ENCODE measurements at regions of chr3 and their contacts with region 1.

Region 1: GRCh38 chr3:11379233-11379823 is 107.1 kb downstream of the ATG7 start:
- DNase-seq: no peak
- H3K4me3 Mint-ChIP-seq: no peak overlapping the region
- H3K27ac Mint-ChIP-seq: no peak overlapping the region
- H3K4me1 Mint-ChIP-seq: no peaks in the 10 kb centered on the region
- H3K27me3 Mint-ChIP-seq: no peaks in the 10 kb centered on the region

Region 2: DNA sequence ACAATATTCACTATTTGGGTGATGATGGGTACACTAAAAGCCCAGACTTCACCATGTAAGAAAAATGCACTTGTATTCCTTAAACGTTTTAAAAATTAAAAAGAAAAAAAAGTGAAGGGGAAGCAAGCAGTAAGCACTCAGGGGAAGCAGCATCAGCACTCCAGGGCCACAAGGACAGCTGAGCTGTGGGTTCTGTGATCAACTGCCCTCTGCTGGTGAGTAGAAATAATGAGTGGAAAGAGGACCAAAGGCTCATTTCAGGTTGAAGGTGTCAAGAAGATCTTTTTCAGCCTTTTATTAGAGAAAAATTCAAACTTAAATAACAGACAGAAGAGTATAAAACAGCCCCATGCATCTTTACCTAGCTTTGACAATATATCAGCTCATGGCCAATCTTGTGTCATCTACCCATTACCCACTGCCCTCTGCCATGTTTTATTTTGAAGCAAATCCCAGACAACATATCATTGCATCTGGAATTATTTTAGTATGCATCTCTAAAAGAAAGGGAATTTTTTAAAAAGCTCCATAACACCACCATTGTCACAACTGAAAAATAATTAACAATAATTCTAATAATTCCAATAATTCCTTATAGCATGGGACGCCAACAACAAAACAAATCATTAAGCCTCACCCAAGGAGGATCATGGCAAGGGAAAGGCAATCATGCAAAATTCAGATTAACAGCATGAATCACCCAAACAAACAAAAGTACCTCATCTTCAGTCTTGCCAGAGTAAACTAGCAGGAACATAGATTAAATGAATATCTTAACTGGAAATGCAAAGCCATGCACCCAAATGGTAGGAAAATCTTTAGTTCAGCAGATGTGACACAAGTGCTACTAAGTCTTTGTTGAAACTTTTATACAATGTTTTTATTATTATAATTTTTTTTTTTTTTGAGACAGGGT is 424.9 kb after region 1 on chr3:
- CTCF ChIA-PET with region 1: interaction called, 6 read pairs
- POLR2A ChIA-PET with region 1: no interaction called
- intact Hi-C with region 1: loop called (anchors 1 kb)
- DNase-seq: peak; percentile 42
- H3K4me3 Mint-ChIP-seq: no peak overlapping the region
- H3K27ac Mint-ChIP-seq: no peak overlapping the region
- H3K4me1 Mint-ChIP-seq: peaks cover 2% of the 10 kb centered on the region
- H3K27me3 Mint-ChIP-seq: no peaks in the 10 kb centered on the region